Right ventricle myocardium inferior (tissue), 1 donor: ENCODE measurements at regions of chr3 and their contacts with region 1.

Region 1: DNA sequence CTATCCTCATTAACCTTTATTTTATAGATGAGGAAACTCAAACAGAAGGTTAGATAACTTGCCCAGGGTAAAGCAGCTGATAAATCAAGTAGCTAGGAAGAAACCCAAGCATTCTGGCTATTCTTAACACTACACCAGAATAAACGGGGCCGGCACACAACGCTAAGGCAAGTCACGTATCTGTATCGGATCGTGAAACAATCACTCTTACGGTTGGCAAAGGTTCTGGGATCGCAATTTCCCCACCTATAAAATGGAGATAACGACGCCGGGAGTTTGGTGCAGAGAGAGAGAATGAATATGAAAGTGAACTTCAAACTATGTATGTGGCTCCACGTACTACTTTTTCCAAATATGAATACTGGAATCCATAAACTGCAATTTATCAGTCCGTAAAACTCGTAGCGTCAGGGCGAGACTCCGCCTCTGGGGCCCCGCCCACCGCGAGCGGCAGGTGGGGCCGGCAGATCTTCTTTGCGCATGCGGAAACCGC is 252 bp upstream of the ARMC8 start:
- DNase-seq: peak; percentile 97
- ATAC-seq: peak; percentile 98

Region 2: GRCh38 chr3:138118612-138119422 is 68.0 kb before region 1 on chr3:
- intact Hi-C with region 1: loop called (anchors 5 kb)
- DNase-seq: no peak
- ATAC-seq: peak; percentile 58

Region 3: DNA sequence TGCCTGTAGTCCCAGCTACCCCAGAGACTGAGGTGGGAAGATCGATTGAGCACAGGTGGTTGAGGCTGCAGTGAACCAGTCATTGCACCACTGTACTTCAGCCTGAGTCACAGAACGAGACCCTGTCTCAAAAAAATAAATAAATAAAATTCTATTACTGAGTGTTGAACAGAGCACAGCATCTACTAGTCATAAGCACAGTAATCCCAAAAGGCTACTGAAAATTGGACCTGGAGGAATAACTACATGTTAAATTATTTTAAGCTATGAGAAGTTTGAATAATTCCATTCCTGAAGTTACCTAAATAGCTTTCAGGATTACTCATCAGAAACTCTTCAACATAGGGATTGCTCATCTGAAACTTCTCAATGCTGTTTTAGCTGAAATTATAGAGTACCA is 43.7 kb after region 1 on chr3:
- intact Hi-C with region 1: no loop called
- DNase-seq: no peak
- ATAC-seq: no peak

Region 4: GRCh38 chr3:138426226-138426625 is 239.4 kb after region 1 on chr3:
- intact Hi-C with region 1: loop called (anchors 10 kb)
- DNase-seq: no peak
- ATAC-seq: no peak